Endothelial cell of umbilical vein (primary cell): ENCODE measurements at regions of chr16 and their contacts with region 1.

Region 1: DNA sequence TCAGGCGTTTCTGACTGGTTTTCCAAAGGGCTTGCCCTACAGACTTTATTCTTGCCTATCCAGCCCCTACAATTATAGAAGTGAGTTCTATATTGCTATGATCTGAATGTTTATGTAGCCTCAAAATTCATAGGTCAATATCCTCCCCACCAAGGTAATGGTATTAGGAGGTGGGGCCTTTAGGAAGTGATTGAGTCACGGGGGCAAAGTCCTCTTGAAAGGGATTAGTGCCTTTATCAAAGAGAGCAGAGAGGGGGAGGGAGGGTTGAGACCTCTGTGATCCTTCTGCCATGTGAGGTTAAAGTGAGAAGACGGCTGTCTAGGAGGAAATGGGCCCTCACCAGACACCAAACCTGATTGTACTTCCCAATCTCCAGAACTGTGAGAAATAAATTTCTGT is 931 bp upstream of the CPHXL start:
- DNase-seq: no peak
- H3K4me3 ChIP-seq: no peak overlapping the region
- H3K27ac ChIP-seq: no peak overlapping the region
- H3K4me1 ChIP-seq: no peaks in the 10 kb centered on the region
- H3K27me3 ChIP-seq: no peaks in the 10 kb centered on the region
- CTCF ChIP-seq: no peak
- POLR2A ChIP-seq: no peak

Region 2: DNA sequence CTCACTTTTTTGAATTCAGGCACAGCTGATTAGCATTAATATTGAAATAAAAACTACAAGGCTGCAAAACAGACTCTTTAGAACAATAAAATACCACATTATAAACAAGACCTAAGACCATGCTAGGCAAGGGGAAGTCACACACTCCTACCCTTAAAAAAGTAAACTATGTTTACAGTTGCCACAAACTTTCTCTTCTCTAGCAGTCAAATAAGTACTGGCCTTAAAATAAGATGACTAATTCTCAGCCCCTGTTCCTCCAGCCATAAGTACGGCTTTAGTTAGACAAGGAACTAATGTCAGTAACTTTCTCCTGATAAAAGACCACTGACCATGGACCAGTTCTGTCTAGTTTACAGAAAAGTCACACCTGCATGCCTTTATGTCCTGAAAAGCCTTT is 18.6 kb after region 1 on chr16:
- CTCF ChIA-PET with region 1: no interaction called
- POLR2A ChIA-PET with region 1: no interaction called
- dilution Hi-C with region 1: no loop called
- intact Hi-C with region 1: no loop called
- DNase-seq: no peak
- H3K4me3 ChIP-seq: no peak overlapping the region
- H3K27ac ChIP-seq: no peak overlapping the region
- H3K4me1 ChIP-seq: no peaks in the 10 kb centered on the region
- H3K27me3 ChIP-seq: no peaks in the 10 kb centered on the region
- CTCF ChIP-seq: no peak
- POLR2A ChIP-seq: no peak

Region 3: DNA sequence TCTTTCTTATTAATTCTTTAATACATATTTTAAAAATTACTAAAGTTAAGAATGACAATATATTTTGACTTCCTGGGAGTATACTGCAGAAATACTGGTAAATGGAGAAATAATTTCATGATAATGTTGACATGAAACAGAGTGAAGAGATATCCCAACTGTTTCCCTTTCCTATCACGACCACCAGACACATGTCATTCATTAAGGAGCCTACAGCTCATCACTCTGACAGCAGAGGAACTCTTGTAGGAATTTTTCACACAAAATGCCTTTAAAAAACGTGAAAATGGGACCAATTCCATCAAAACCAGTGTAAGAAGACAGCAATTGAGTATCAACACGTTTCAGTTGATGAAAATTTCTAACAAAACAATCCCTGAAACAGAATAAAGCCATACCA is 171.9 kb after region 1 on chr16:
- CTCF ChIA-PET with region 1: no interaction called
- POLR2A ChIA-PET with region 1: no interaction called
- dilution Hi-C with region 1: no loop called
- intact Hi-C with region 1: no loop called
- DNase-seq: no peak
- H3K4me3 ChIP-seq: no peak overlapping the region
- H3K27ac ChIP-seq: no peak overlapping the region
- H3K4me1 ChIP-seq: no peaks in the 10 kb centered on the region
- H3K27me3 ChIP-seq: no peaks in the 10 kb centered on the region
- CTCF ChIP-seq: no peak
- POLR2A ChIP-seq: no peak

Region 4: GRCh38 chr16:77359065-77359502 is 1631.9 kb after region 1 on chr16:
- CTCF ChIA-PET with region 1: no interaction called
- POLR2A ChIA-PET with region 1: no interaction called
- dilution Hi-C with region 1: no loop called
- intact Hi-C with region 1: loop called (anchors 5 kb)
- DNase-seq: peak; percentile 51
- H3K4me3 ChIP-seq: no peak overlapping the region
- H3K27ac ChIP-seq: no peak overlapping the region
- H3K4me1 ChIP-seq: no peaks in the 10 kb centered on the region
- H3K27me3 ChIP-seq: no peaks in the 10 kb centered on the region
- CTCF ChIP-seq: no peak
- POLR2A ChIP-seq: no peak